AG04449 (cell line): ENCODE measurements at regions of chr16 and their contacts with region 1.

Region 1: GRCh38 chr16:70380861-70381603 is 34.3 kb downstream of the DDX19A start:
- DNase-seq: peak; percentile 76
- H3K4me3 ChIP-seq: peak overlapping the region; percentile 84
- CTCF ChIP-seq: peak; percentile 22

Region 2: GRCh38 chr16:70269471-70269870 is 111.6 kb before region 1 on chr16:
- CTCF ChIA-PET with region 1: no interaction called
- POLR2A ChIA-PET with region 1: no interaction called
- DNase-seq: no peak
- H3K4me3 ChIP-seq: no peak overlapping the region
- CTCF ChIP-seq: no peak

Region 3: GRCh38 chr16:70337814-70338213 is 43.2 kb before region 1 on chr16:
- CTCF ChIA-PET with region 1: no interaction called
- POLR2A ChIA-PET with region 1: no interaction called
- DNase-seq: no peak
- H3K4me3 ChIP-seq: no peak overlapping the region
- CTCF ChIP-seq: no peak

Region 4: DNA sequence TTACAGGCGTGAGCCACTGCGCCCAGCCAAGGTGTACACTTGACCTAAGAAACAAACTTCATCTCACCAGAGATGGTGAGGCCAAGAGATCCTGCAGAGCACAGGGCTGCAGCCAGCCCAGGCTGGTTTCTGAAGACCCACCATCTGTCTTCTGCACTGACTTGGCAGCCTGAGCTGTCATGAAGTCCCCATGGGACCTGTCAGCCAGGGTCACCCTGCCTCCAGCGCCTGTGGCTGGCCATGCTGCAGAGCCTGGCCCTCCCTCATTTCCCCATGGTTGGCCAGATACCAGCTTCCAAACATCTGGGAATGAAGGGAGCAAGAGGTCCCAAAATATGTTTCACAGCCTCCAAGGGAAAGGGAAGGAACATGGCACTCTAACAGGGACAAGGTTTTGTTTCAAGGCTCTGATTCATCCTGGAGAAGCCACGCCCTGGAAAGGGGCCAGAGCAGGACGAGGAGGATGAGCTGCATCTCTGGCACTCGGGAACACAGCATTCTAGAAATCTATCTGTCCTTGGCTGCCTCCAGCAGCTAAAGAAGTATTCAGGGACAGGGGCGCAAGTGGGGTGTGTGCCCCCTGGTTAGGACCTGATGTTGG is 10.9 kb after region 1 on chr16:
- CTCF ChIA-PET with region 1: interaction called, 11 read pairs
- POLR2A ChIA-PET with region 1: interaction called, 20 read pairs
- DNase-seq: no peak
- H3K4me3 ChIP-seq: no peak overlapping the region
- CTCF ChIP-seq: no peak

Region 5: GRCh38 chr16:70428178-70428998 is 47.4 kb after region 1 on chr16:
- CTCF ChIA-PET with region 1: no interaction called
- POLR2A ChIA-PET with region 1: interaction called, 11 read pairs
- DNase-seq: peak; percentile 66
- H3K4me3 ChIP-seq: peak overlapping the region; percentile 1; the same call in 1 of the 2 replicates
- CTCF ChIP-seq: no peak

Region 6: DNA sequence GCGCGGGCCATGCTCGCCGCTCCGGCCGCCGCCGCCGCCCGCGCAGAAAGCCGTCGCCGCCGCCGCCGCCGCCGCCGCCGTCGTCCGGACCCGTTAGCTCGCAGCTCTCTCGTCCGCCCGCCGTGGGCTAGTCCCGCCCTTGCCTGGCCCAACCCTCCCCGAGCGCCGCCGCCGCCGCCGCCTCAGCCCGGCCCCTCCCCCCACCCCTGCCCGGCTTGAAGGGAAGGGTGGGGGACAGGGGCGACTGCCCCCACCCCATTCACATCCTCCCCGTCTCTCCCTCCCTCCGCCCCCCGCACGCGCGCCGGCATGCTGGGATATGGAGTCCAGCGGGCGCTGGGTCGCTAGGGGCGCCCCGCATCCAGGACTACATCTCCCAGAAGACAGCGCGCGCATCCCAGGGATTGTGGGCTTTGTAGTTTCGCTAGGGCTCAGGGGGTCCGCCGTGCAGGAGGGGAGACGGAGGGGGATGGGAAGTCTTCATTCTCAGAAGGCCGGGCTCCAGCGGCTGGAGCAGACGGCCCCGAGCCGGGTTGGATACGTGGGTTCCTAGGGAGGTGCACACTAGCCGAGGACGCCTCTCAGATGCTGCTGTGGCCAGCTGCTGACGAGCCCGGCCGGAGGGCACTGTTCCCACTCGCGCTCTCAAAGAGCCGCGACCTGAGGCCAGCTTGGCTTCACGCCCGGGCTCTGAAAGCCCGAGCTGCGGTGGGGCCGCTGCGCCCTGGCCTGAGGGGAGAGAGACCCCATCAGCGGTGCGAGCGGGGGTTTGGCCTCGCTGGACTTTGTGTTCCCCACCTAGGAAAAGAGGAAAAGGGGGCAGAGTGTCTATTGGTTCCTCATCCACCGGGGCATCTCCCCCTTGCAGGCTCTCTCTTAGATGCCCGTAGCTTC is 58.2 kb after region 1 on chr16 and contains the start of gene ST3GAL2:
- CTCF ChIA-PET with region 1: no interaction called
- POLR2A ChIA-PET with region 1: interaction called, 19 read pairs
- DNase-seq: no peak
- H3K4me3 ChIP-seq: peak within 1 kb of the TSS; percentile 92
- CTCF ChIP-seq: peak; percentile 38

Region 7: GRCh38 chr16:70454222-70455034 is 73.4 kb after region 1 on chr16 and contains the start of gene FCSK:
- CTCF ChIA-PET with region 1: interaction called, 4 read pairs
- POLR2A ChIA-PET with region 1: interaction called, 19 read pairs
- DNase-seq: no peak
- H3K4me3 ChIP-seq: peak within 1 kb of the TSS; percentile 83
- CTCF ChIP-seq: no peak